CD8-positive, alpha-beta T cell (primary cell): ENCODE measurements at regions of chr11 and their contacts with region 1.

Region 1: GRCh38 chr11:9506489-9507276 is 45.9 kb downstream of the ZNF143 start:
- DNase-seq: peak; percentile 44 to 84 (median 77)
- ATAC-seq: peak; percentile 84
- H3K4me3 ChIP-seq: no peak overlapping the region
- H3K4me3 Mint-ChIP-seq: no peak overlapping the region
- H3K27ac ChIP-seq: no peak overlapping the region
- H3K27ac Mint-ChIP-seq: no peak overlapping the region
- H3K4me1 ChIP-seq: no peaks in the 10 kb centered on the region
- H3K4me1 Mint-ChIP-seq: peaks cover 11% of the 10 kb centered on the region
- H3K27me3 ChIP-seq: no peaks in the 10 kb centered on the region
- H3K27me3 Mint-ChIP-seq: no peaks in the 10 kb centered on the region
- CTCF ChIP-seq: peak; percentile 84

Region 2: GRCh38 chr11:8911029-8911826 is 595.5 kb before region 1 on chr11 and contains the start of gene AKIP1:
- CTCF ChIA-PET with region 1: interaction called, 16 read pairs
- POLR2A ChIA-PET with region 1: no interaction called
- intact Hi-C with region 1: loop called (anchors 1 to 2 kb)
- DNase-seq: peak; percentile 37 to 93 (median 83)
- ATAC-seq: peak; percentile 77
- H3K4me3 ChIP-seq: peak within 1 kb of the TSS; percentile 76 to 94
- H3K4me3 Mint-ChIP-seq: peak within 1 kb of the TSS; percentile 91
- H3K27ac ChIP-seq: peak within 1 kb of the TSS; percentile 51 to 78
- H3K27ac Mint-ChIP-seq: peak within 1 kb of the TSS; percentile 90
- H3K4me1 ChIP-seq: peaks cover 23% of the 10 kb centered on the region
- H3K4me1 Mint-ChIP-seq: peaks cover 37% of the 10 kb centered on the region
- H3K27me3 ChIP-seq: no peaks in the 10 kb centered on the region
- H3K27me3 Mint-ChIP-seq: no peaks in the 10 kb centered on the region
- CTCF ChIP-seq: no peak
- total RNA-seq, gene AKIP1: 3.9 to 4.2 TPM

Region 3: DNA sequence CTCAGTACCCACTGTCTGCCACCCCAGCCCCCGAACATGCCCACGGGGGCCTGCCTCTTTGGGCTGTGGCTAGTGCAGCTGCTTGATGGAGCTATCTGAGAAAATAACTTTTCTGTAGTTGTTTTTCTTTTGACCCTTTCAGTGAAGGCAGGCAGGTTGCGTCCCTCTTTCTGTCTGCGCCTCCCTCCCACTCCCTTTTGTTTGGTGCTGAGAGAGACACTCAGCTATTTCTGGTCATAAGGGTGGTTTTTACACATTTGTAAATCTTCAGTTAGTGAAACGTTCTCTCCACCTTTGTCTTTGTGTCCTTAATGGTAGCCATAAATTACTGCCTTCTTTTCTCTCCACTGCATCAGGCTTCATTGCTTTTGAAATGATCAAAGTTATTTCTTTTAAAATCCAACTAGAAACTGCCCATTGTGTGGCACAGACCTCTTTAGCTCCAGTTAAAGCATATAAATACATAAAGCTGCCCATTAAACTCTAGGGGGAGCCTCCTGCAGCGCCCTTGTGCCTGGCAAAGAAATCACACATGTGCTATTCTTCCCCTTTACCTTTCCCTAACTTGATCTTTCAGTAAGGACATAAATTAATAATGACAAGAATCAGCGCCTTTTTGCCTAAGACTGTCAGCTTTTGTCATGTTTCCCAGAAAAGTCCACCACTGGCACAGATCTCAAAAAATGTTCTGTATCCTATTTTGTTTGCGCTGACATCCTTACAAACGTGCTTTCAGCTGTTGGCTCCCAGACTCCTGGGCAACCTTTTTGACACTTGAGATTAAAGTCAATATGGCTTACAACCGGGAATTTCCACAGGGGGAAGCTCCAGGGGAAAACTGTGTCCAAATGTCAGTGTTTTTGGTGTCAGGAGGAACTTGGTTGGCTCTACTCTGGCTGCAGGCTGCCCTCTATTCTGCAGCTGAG is 413.6 kb before region 1 on chr11:
- CTCF ChIA-PET with region 1: interaction called, 13 read pairs
- POLR2A ChIA-PET with region 1: no interaction called
- intact Hi-C with region 1: no loop called
- DNase-seq: no peak
- ATAC-seq: no peak
- H3K4me3 ChIP-seq: no peak overlapping the region
- H3K4me3 Mint-ChIP-seq: peak overlapping the region; percentile 17
- H3K27ac ChIP-seq: no peak overlapping the region
- H3K27ac Mint-ChIP-seq: no peak overlapping the region
- H3K4me1 ChIP-seq: no peaks in the 10 kb centered on the region
- H3K4me1 Mint-ChIP-seq: peaks cover 8% of the 10 kb centered on the region
- H3K27me3 ChIP-seq: peaks cover 4 to 6% of the 10 kb centered on the region in 2 experiments
- H3K27me3 Mint-ChIP-seq: peaks cover 58% of the 10 kb centered on the region
- CTCF ChIP-seq: no peak

Region 4: DNA sequence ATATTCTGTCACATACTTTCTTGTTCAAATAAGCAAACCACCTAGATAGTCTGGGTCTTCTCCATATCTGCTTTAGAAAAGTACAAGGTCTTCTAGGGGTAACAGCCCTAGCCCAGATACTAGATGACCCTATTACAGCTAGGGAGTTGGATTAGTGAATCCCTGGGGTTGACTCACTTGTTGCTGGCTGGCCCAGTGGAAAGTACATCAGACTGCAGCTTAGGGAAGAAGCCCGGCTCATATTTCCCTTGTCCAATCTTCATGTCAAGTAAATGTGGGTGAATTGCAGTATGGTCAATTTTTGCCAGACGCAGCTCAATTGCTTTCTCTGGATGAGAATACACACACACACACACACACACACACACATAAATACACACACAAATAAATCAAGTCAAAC is 336.2 kb before region 1 on chr11:
- CTCF ChIA-PET with region 1: interaction called, 28 read pairs
- POLR2A ChIA-PET with region 1: no interaction called
- intact Hi-C with region 1: loop called in 1 of 2 experiments (anchors 1 kb)
- DNase-seq: no peak
- ATAC-seq: no peak
- H3K4me3 ChIP-seq: no peak overlapping the region
- H3K4me3 Mint-ChIP-seq: no peak overlapping the region
- H3K27ac ChIP-seq: no peak overlapping the region
- H3K27ac Mint-ChIP-seq: no peak overlapping the region
- H3K4me1 ChIP-seq: no peaks in the 10 kb centered on the region
- H3K4me1 Mint-ChIP-seq: peaks cover 5% of the 10 kb centered on the region
- H3K27me3 ChIP-seq: no peaks in the 10 kb centered on the region
- H3K27me3 Mint-ChIP-seq: no peaks in the 10 kb centered on the region
- CTCF ChIP-seq: no peak

Region 5: DNA sequence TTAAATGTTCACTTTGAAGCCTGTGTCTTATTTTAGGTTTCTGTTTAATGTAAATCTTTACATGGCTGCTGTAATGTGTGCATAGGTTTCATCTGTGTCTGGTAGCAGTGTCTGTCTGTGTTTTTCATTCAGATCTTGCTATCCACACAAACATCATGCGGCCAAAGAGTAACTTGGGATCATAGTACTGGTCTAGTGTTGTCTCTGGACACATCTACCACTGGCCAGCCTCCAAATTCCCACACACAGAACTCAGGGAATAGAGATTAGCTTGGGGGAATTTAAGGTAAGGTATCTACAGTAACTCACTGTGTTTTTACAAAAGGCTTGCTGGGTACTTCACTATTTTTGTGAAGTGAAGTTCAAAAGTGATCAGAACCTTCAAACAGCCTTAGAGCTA is 78.0 kb before region 1 on chr11:
- CTCF ChIA-PET with region 1: no interaction called
- POLR2A ChIA-PET with region 1: no interaction called
- intact Hi-C with region 1: loop called in 1 of 2 experiments (anchors 5 kb)
- DNase-seq: no peak
- ATAC-seq: no peak
- H3K4me3 ChIP-seq: no peak overlapping the region
- H3K4me3 Mint-ChIP-seq: no peak overlapping the region
- H3K27ac ChIP-seq: no peak overlapping the region
- H3K27ac Mint-ChIP-seq: no peak overlapping the region
- H3K4me1 ChIP-seq: no peaks in the 10 kb centered on the region
- H3K4me1 Mint-ChIP-seq: no peaks in the 10 kb centered on the region
- H3K27me3 ChIP-seq: no peaks in the 10 kb centered on the region
- H3K27me3 Mint-ChIP-seq: no peaks in the 10 kb centered on the region
- CTCF ChIP-seq: no peak

Region 6: GRCh38 chr11:9489080-9489765 is 17.5 kb before region 1 on chr11:
- CTCF ChIA-PET with region 1: interaction called, 12 read pairs
- POLR2A ChIA-PET with region 1: no interaction called
- intact Hi-C with region 1: no loop called
- DNase-seq: no peak
- ATAC-seq: no peak
- H3K4me3 ChIP-seq: no peak overlapping the region
- H3K4me3 Mint-ChIP-seq: no peak overlapping the region
- H3K27ac ChIP-seq: no peak overlapping the region
- H3K27ac Mint-ChIP-seq: peak overlapping the region; percentile 30
- H3K4me1 ChIP-seq: no peaks in the 10 kb centered on the region
- H3K4me1 Mint-ChIP-seq: peaks cover 2% of the 10 kb centered on the region
- H3K27me3 ChIP-seq: no peaks in the 10 kb centered on the region
- H3K27me3 Mint-ChIP-seq: no peaks in the 10 kb centered on the region
- CTCF ChIP-seq: no peak